CD4-positive, alpha-beta memory T cell (primary cell): ENCODE measurements at regions of chr6 and their contacts with region 1.

Region 1: DNA sequence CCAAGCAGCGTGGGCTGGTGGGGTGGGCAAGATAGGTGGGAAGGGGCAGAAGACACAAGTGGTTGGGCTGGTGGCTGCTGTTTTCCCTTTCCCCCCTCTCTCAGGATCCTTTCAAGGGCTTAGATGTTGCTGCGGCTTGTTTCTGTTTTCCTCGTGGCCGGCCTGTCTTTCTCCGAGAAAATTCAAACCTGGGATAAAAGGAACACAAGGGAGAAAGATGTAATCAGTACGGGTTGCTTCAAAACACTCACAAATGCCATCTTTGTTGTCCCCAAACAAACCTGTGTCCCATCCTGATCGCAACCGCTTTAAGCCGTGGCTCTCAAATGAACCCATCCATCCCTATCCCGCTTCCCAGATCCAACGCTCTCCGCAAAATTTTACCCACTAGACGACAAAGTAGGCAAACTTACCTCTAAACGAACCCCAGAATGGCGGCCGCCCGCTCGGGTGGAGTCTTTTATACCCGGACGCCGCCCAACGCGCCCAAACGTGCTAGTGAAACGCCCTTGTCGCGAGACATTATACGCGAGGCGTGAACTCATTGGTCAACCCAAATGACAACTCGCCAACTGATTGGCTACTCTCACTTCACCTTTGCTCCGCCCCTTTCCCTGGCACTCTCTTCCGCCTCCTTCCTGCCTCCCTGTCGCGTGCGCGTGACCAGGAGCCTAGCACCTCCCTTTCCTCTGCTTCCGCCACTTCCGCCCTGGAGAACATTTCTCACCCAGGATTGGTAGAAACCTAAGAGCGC is at the start of gene PPP1R10:
- DNase-seq: peak; percentile 98 to 100 (median 100)
- H3K4me3 ChIP-seq: peak within 1 kb of the TSS; percentile 91 to 95
- H3K4me3 Mint-ChIP-seq: peak within 1 kb of the TSS; percentile 97 to 100 (median 100)
- H3K27ac ChIP-seq: peak within 1 kb of the TSS; percentile 94
- H3K27ac Mint-ChIP-seq: peak within 1 kb of the TSS; percentile 100
- H3K4me1 ChIP-seq: peaks cover 45% of the 10 kb centered on the region
- H3K4me1 Mint-ChIP-seq: peaks cover 22 to 62% (median 35%) of the 10 kb centered on the region in 4 donors
- H3K27me3 ChIP-seq: no peaks in the 10 kb centered on the region
- H3K27me3 Mint-ChIP-seq: peaks cover 0 to 1% of the 10 kb centered on the region in 2 donors
- total RNA-seq, gene PPP1R10: 224 to 231 TPM

Region 2: GRCh38 chr6:30463651-30464618 is 153.1 kb before region 1 on chr6:
- CTCF ChIA-PET with region 1: no interaction called
- POLR2A ChIA-PET with region 1: interaction called, 12 read pairs
- intact Hi-C with region 1: no loop called
- DNase-seq: peak; percentile 64 to 83 (median 70)
- H3K4me3 ChIP-seq: no peak overlapping the region
- H3K4me3 Mint-ChIP-seq: peak overlapping the region; percentile 11 to 80 (median 64)
- H3K27ac ChIP-seq: no peak overlapping the region
- H3K27ac Mint-ChIP-seq: peak overlapping the region in 1 of 7 donors; percentile 66
- H3K4me1 ChIP-seq: peaks cover 52% of the 10 kb centered on the region
- H3K4me1 Mint-ChIP-seq: peaks cover 25 to 61% (median 45%) of the 10 kb centered on the region in 4 donors
- H3K27me3 ChIP-seq: peaks cover 76% of the 10 kb centered on the region
- H3K27me3 Mint-ChIP-seq: peaks cover 70 to 72% of the 10 kb centered on the region in 2 donors

Region 3: GRCh38 chr6:30515932-30516753 is 100.8 kb before region 1 on chr6:
- CTCF ChIA-PET with region 1: interaction called, 3 read pairs
- POLR2A ChIA-PET with region 1: interaction called, 20 read pairs
- intact Hi-C with region 1: no loop called
- DNase-seq: peak; percentile 91 to 98 (median 96)
- H3K4me3 ChIP-seq: peak overlapping the region; percentile 42 to 64
- H3K4me3 Mint-ChIP-seq: peak overlapping the region; percentile 85 to 92 (median 88)
- H3K27ac ChIP-seq: peak overlapping the region; percentile 91
- H3K27ac Mint-ChIP-seq: peak overlapping the region; percentile 95 to 99 (median 99)
- H3K4me1 ChIP-seq: peaks cover 66% of the 10 kb centered on the region
- H3K4me1 Mint-ChIP-seq: peaks cover 28 to 78% (median 49%) of the 10 kb centered on the region in 4 donors
- H3K27me3 ChIP-seq: no peaks in the 10 kb centered on the region
- H3K27me3 Mint-ChIP-seq: no peaks in the 10 kb centered on the region

Region 4: GRCh38 chr6:30556066-30556905 is 60.7 kb before region 1 on chr6 and contains the start of gene GNL1:
- CTCF ChIA-PET with region 1: no interaction called
- POLR2A ChIA-PET with region 1: interaction called, 97 read pairs
- intact Hi-C with region 1: loop called (anchors 1 kb)
- DNase-seq: peak; percentile 98 to 99 (median 99)
- H3K4me3 ChIP-seq: peak within 1 kb of the TSS; percentile 79 to 99
- H3K4me3 Mint-ChIP-seq: peak within 1 kb of the TSS; percentile 97 to 100 (median 99)
- H3K27ac ChIP-seq: peak within 1 kb of the TSS; percentile 96
- H3K27ac Mint-ChIP-seq: peak within 1 kb of the TSS; percentile 97 to 100 (median 100)
- H3K4me1 ChIP-seq: peaks cover 30% of the 10 kb centered on the region
- H3K4me1 Mint-ChIP-seq: peaks cover 26 to 65% (median 38%) of the 10 kb centered on the region in 4 donors
- H3K27me3 ChIP-seq: no peaks in the 10 kb centered on the region
- H3K27me3 Mint-ChIP-seq: peaks cover 0 to 1% of the 10 kb centered on the region in 2 donors
- total RNA-seq, gene GNL1: 83.4 to 83.9 TPM

Region 5: GRCh38 chr6:30640476-30640875 is 23.5 kb after region 1 on chr6:
- CTCF ChIA-PET with region 1: no interaction called
- POLR2A ChIA-PET with region 1: interaction called, 58 read pairs
- intact Hi-C with region 1: no loop called
- DNase-seq: no peak
- H3K4me3 ChIP-seq: no peak overlapping the region
- H3K4me3 Mint-ChIP-seq: no peak overlapping the region
- H3K27ac ChIP-seq: no peak overlapping the region
- H3K27ac Mint-ChIP-seq: no peak overlapping the region
- H3K4me1 ChIP-seq: no peaks in the 10 kb centered on the region
- H3K4me1 Mint-ChIP-seq: peaks cover 0 to 8% (median 5%) of the 10 kb centered on the region in 4 donors
- H3K27me3 ChIP-seq: no peaks in the 10 kb centered on the region
- H3K27me3 Mint-ChIP-seq: no peaks in the 10 kb centered on the region

Region 6: GRCh38 chr6:30686908-30687658 is 70.1 kb after region 1 on chr6:
- CTCF ChIA-PET with region 1: interaction called, 4 read pairs
- POLR2A ChIA-PET with region 1: interaction called, 89 read pairs
- intact Hi-C with region 1: loop called (anchors 2 kb)
- DNase-seq: peak in 4 of 5 donors; percentile 43 to 83 (median 45)
- H3K4me3 ChIP-seq: peak overlapping the region; percentile 93 to 100
- H3K4me3 Mint-ChIP-seq: peak overlapping the region; percentile 97 to 100 (median 99)
- H3K27ac ChIP-seq: peak overlapping the region; percentile 94
- H3K27ac Mint-ChIP-seq: peak overlapping the region; percentile 94 to 99 (median 96)
- H3K4me1 ChIP-seq: peaks cover 40% of the 10 kb centered on the region
- H3K4me1 Mint-ChIP-seq: peaks cover 32 to 71% (median 40%) of the 10 kb centered on the region in 4 donors
- H3K27me3 ChIP-seq: no peaks in the 10 kb centered on the region
- H3K27me3 Mint-ChIP-seq: no peaks in the 10 kb centered on the region